ENCODE measurements at regions of chr14 and their contacts with region 1.

Region 1: GRCh38 chr14:68401855-68402254 is 391.0 kb downstream of the ZFP36L1 start:
- DNase-seq: peak; percentile 96
- ATAC-seq: peak; percentile 57
- H3K4me3 ChIP-seq: no peak overlapping the region
- H3K27ac ChIP-seq: peak overlapping the region; percentile 100
- H3K4me1 ChIP-seq: peaks cover 66% of the 10 kb centered on the region
- H3K27me3 ChIP-seq: no peaks in the 10 kb centered on the region
- CTCF ChIP-seq: no peak
- EP300 ChIP-seq: peak; percentile 94 to 99
- POLR2A ChIP-seq: no peak
- RAD21 ChIP-seq: peak; percentile 21; the same call in 1 of the 2 replicates

Region 2: DNA sequence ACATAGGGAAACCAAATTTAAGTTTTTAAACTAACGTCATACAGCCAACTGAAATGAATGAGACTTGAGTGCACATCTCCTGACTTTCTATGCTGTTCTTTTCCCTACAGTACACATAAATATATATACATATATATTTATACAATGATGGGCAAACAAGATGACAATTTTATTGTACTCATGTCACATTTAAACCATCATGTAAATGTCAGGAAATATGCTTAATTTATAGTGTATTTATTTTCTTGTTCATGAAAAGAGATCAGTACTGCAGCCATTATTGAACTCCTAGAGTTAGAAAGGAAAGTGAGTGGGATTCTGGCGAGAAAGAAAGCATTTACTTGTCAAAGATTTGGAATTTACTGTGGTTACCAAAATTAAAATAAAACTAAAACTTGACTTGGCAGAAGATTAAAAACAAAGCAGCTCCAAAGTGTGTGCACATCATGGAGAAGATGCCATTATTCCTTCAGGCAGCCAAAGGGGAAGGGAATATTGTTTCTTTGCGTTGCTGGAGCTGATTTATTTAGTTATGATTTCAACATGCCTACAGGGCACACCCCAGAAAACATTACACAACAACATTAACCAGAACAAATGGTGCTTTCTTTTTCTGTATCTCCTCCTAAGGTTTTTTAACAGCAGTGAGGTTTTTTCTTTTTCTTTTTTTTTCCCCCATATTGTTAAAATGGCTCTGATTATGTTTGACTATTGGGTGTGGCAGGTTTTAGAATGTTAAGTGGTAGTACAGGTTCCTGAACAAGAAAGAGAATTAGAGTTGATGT is 437.7 kb before region 1 on chr14:
- CTCF ChIA-PET with region 1: no interaction called
- POLR2A ChIA-PET with region 1: no interaction called
- RAD21 ChIA-PET with region 1: no interaction called
- SMC1A ChIA-PET with region 1: no interaction called
- in situ Hi-C with region 1: no loop called
- intact Hi-C with region 1: no loop called
- DNase-seq: no peak
- ATAC-seq: no peak
- H3K4me3 ChIP-seq: no peak overlapping the region
- H3K27ac ChIP-seq: no peak overlapping the region
- H3K4me1 ChIP-seq: peaks cover 16% of the 10 kb centered on the region; the same call in 1 of the 2 replicates
- H3K27me3 ChIP-seq: no peaks in the 10 kb centered on the region
- CTCF ChIP-seq: no peak
- EP300 ChIP-seq: no peak
- POLR2A ChIP-seq: no peak
- RAD21 ChIP-seq: no peak

Region 3: GRCh38 chr14:68215629-68216028 is 186.2 kb before region 1 on chr14:
- CTCF ChIA-PET with region 1: no interaction called
- POLR2A ChIA-PET with region 1: no interaction called
- RAD21 ChIA-PET with region 1: no interaction called
- SMC1A ChIA-PET with region 1: no interaction called
- in situ Hi-C with region 1: no loop called
- intact Hi-C with region 1: no loop called
- DNase-seq: peak; percentile 57
- ATAC-seq: peak; percentile 35
- H3K4me3 ChIP-seq: no peak overlapping the region
- H3K27ac ChIP-seq: peak overlapping the region; percentile 62
- H3K4me1 ChIP-seq: peaks cover 38% of the 10 kb centered on the region
- H3K27me3 ChIP-seq: no peaks in the 10 kb centered on the region
- CTCF ChIP-seq: no peak
- EP300 ChIP-seq: no peak
- POLR2A ChIP-seq: no peak
- RAD21 ChIP-seq: no peak

Region 4: DNA sequence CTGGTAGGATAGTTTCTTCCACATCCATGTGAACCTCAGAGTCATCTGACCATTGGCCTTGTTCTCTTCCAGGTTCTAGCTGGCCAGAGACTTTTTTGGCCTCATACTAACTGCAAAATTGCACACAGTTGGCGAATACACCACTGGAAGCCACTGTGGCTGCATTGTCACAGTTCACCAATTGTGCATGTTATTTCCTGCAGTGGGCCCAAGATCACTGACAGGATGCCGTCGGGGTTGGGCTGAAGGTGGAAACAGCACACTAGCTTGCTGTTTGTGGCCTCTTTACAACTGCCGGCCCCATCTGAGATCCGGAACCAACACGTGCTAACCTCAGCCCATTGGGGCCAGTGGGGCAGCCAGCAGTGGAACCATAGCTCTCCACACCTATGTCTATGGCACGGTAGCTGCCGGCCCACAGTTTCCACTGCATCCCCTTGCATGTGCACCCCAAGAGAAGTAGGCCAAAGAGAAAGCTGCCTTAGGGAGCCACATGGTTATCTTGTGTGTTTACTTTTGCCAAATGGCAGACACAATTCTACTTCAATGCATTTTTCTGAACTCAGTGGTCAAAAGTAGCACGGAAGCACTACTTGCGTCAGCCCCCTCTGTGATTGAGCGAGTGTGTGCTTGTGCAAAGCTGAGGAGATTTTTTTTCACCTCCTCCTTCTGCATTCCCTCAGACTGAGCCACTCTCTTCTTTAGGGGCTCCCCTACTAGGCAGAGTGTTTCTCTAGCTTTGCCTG is 118.3 kb before region 1 on chr14:
- CTCF ChIA-PET with region 1: interaction called, 6 read pairs
- POLR2A ChIA-PET with region 1: interaction called, 50 read pairs
- RAD21 ChIA-PET with region 1: interaction called, 131 read pairs
- SMC1A ChIA-PET with region 1: interaction called, 227 read pairs
- in situ Hi-C with region 1: no loop called
- intact Hi-C with region 1: loop called (anchors 1 kb)
- DNase-seq: peak; percentile 95
- ATAC-seq: peak; percentile 57
- H3K4me3 ChIP-seq: no peak overlapping the region
- H3K27ac ChIP-seq: peak overlapping the region; percentile 92
- H3K4me1 ChIP-seq: peaks cover 89% of the 10 kb centered on the region
- H3K27me3 ChIP-seq: no peaks in the 10 kb centered on the region
- CTCF ChIP-seq: no peak
- EP300 ChIP-seq: peak; percentile 68 to 84
- POLR2A ChIP-seq: peak; percentile 78
- RAD21 ChIP-seq: peak; percentile 20; the same call in 1 of the 2 replicates

Region 5: GRCh38 chr14:68359837-68360552 is 41.9 kb before region 1 on chr14:
- CTCF ChIA-PET with region 1: no interaction called
- POLR2A ChIA-PET with region 1: no interaction called
- RAD21 ChIA-PET with region 1: interaction called, 194 read pairs
- SMC1A ChIA-PET with region 1: interaction called, 39 read pairs
- in situ Hi-C with region 1: no loop called
- intact Hi-C with region 1: no loop called
- DNase-seq: no peak
- ATAC-seq: peak; percentile 47
- H3K4me3 ChIP-seq: no peak overlapping the region
- H3K27ac ChIP-seq: peak overlapping the region; percentile 82
- H3K4me1 ChIP-seq: peaks cover 33% of the 10 kb centered on the region
- H3K27me3 ChIP-seq: no peaks in the 10 kb centered on the region
- CTCF ChIP-seq: no peak
- EP300 ChIP-seq: no peak
- POLR2A ChIP-seq: no peak
- RAD21 ChIP-seq: no peak

Region 6: DNA sequence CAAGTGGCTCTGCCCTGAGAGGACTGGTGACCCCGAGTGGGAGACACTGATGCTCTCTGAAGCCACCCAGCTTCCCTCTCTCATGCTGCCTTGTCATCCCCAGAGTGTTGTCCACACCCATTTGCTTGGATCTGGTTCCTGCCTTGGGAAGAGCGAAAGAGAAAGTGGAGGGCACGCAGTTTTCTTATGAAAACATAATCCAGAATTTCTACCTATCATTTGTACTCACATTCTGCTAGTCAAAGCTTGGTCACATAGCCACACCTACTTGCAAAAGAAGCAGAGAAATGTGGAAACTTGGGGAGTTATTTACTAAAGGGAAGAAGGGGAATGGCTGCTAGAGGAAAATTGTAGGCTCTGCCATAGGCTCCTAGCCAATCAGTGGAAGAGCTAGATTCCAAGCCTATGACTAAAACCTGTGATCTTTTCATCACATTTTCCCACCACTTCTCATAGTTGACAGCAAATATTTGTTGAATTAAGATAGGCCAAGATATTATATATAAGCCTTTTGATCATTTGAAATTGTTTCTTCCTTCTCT is 64.7 kb after region 1 on chr14:
- CTCF ChIA-PET with region 1: interaction called, 7 read pairs
- POLR2A ChIA-PET with region 1: interaction called, 5 read pairs
- RAD21 ChIA-PET with region 1: interaction called, 18 read pairs
- SMC1A ChIA-PET with region 1: interaction called, 20 read pairs
- in situ Hi-C with region 1: no loop called
- intact Hi-C with region 1: no loop called
- DNase-seq: no peak
- ATAC-seq: no peak
- H3K4me3 ChIP-seq: no peak overlapping the region
- H3K27ac ChIP-seq: no peak overlapping the region
- H3K4me1 ChIP-seq: peaks cover 16% of the 10 kb centered on the region
- H3K27me3 ChIP-seq: no peaks in the 10 kb centered on the region
- CTCF ChIP-seq: no peak
- EP300 ChIP-seq: no peak
- POLR2A ChIP-seq: no peak
- RAD21 ChIP-seq: no peak

Region 7: GRCh38 chr14:68513838-68514620 is 112.2 kb after region 1 on chr14:
- CTCF ChIA-PET with region 1: interaction called, 7 read pairs
- POLR2A ChIA-PET with region 1: interaction called, 8 read pairs
- RAD21 ChIA-PET with region 1: interaction called, 45 read pairs
- SMC1A ChIA-PET with region 1: interaction called, 15 read pairs
- in situ Hi-C with region 1: no loop called
- intact Hi-C with region 1: no loop called
- DNase-seq: peak; percentile 92
- ATAC-seq: peak; percentile 92
- H3K4me3 ChIP-seq: no peak overlapping the region; the same call in 1 of the 2 replicates
- H3K27ac ChIP-seq: peak overlapping the region; percentile 85
- H3K4me1 ChIP-seq: peaks cover 24% of the 10 kb centered on the region
- H3K27me3 ChIP-seq: no peaks in the 10 kb centered on the region
- CTCF ChIP-seq: no peak
- EP300 ChIP-seq: 0 out of 4 replicates have a peak, but pooled peaks of 1 of the 2 experiments have one; percentile 46
- POLR2A ChIP-seq: peak; percentile 47; the same call in 1 of the 2 replicates
- RAD21 ChIP-seq: no peak

Region 8: DNA sequence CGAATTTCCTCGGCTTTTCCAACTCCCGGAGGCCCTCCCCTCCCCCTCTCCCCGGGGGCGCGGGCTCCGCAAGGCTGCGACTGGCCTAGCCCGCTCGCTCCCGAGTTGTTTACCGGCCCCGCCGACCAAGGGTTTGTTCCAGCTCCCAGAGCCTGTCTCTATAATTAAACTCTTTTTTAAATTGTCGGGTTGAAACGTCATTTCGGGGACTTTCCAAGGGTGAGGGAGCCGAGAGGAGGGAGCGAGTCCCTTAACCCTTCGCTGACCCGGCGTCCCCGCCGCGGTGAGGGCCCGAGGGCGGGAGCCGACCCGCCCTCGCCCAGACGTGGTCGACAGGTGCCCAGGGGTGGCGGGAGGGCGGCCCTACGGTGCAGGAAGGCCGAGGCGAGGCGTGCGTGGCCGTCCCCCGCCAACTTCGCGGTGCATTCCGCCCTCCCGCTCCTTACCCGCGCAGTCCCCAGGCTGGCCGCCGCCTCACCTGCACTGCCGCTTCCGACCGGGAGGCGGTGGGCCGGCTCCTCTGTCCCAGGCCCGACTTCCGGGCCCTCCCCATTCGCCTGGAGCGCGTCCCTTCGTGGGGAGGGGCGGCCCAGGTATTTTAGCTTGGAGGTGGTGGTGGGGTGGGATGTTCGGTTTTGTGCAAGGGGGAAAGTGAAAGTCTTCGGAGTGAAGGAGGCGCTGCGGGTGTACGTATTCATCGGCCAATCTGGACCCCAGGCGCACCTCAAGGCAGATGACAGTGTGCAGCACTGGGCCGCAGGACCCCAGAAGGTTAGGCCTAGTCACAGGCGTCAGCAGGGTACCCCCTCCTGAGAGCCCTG is 394.0 kb after region 1 on chr14:
- CTCF ChIA-PET with region 1: interaction called, 5 read pairs
- POLR2A ChIA-PET with region 1: interaction called, 23 read pairs
- RAD21 ChIA-PET with region 1: interaction called, 154 read pairs
- SMC1A ChIA-PET with region 1: interaction called, 79 read pairs
- in situ Hi-C with region 1: loop called (anchors 5 kb)
- intact Hi-C with region 1: loop called (anchors 2 kb)
- DNase-seq: no peak
- ATAC-seq: peak; percentile 62
- H3K4me3 ChIP-seq: peak overlapping the region; percentile 97
- H3K27ac ChIP-seq: peak overlapping the region; percentile 100
- H3K4me1 ChIP-seq: peaks cover 18% of the 10 kb centered on the region
- H3K27me3 ChIP-seq: no peaks in the 10 kb centered on the region
- CTCF ChIP-seq: peak; percentile 46 to 74 (median 59); a peak in 5 of 6 replicates
- EP300 ChIP-seq: peak in 1 of 2 experiments; percentile 62; a peak in 3 of 4 replicates
- POLR2A ChIP-seq: peak; percentile 97
- RAD21 ChIP-seq: peak; percentile 43; the same call in 1 of the 2 replicates

Measured in GM12878 (cell line).